PC-9 (cell line): ENCODE measurements at regions of chr17 and their contacts with region 1.

Region 1: GRCh38 chr17:42698736-42699414 is 16.5 kb downstream of the CNTNAP1 start:
- DNase-seq: no peak
- H3K4me3 ChIP-seq: no peak overlapping the region
- H3K27ac ChIP-seq: no peak overlapping the region
- H3K4me1 ChIP-seq: no peaks in the 10 kb centered on the region
- H3K27me3 ChIP-seq: no peaks in the 10 kb centered on the region
- CTCF ChIP-seq: no peak

Region 2: GRCh38 chr17:42193969-42194899 is 504.6 kb before region 1 on chr17 and contains the start of gene GHDC:
- CTCF ChIA-PET with region 1: interaction called, 10 read pairs
- POLR2A ChIA-PET with region 1: no interaction called
- intact Hi-C with region 1: no loop called
- DNase-seq: peak; percentile 63 to 65
- H3K4me3 ChIP-seq: peak within 1 kb of the TSS; percentile 72
- H3K27ac ChIP-seq: no peak within 1 kb of the TSS
- H3K4me1 ChIP-seq: 0 out of 2 replicates have a peak, but pooled peaks cover 6% of the 10 kb centered on the region
- H3K27me3 ChIP-seq: no peaks in the 10 kb centered on the region
- CTCF ChIP-seq: no peak
- total RNA-seq, gene GHDC: 21.5 and 28.6 TPM in 2 replicates

Region 3: DNA sequence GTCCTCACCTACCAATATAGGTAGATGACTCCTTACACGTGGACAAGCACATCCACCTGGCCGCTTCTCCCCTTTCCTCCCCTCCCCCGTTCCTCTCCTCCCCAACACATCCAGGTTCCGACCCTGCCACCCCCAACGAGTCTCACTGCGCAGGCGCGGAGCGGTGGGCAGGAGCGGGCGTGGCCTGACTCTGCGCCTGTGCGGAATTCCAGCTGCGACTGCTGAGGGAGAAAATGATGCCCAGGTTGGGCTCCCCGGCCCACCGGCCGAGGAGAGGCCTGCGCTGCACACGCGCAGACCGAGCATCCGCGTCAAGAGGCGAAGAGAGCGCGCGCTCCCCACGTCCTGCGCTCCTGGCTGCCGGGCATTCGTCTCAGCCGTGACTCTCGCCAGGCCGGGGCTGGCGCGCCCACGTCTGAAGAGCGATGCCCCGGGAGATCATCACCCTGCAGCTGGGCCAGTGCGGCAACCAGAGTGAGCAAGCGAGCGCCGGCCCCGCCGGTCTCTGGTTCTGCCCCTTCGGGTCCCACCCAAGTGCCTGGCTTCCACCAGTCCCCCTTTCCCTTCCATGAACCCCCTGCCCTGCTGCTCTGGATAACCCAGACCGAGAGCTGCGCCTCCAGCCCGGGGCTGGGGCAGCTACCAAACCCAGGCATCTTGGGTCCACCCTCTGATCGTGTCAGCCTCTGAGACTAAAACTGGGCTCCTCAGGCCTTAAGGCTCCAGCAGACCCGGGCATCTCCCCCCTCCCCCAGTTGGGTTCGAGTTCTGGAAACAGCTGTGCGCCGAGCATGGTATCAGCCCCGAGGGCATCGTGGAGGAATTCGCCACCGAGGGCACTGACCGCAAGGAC is 39.6 kb before region 1 on chr17 and contains the start of gene TUBG2:
- CTCF ChIA-PET with region 1: no interaction called
- POLR2A ChIA-PET with region 1: no interaction called
- intact Hi-C with region 1: no loop called
- DNase-seq: peak; percentile 70 to 92
- H3K4me3 ChIP-seq: peak within 1 kb of the TSS; percentile 70
- H3K27ac ChIP-seq: peak within 1 kb of the TSS; percentile 49
- H3K4me1 ChIP-seq: peaks cover 41% of the 10 kb centered on the region
- H3K27me3 ChIP-seq: no peaks in the 10 kb centered on the region
- CTCF ChIP-seq: no peak
- total RNA-seq, gene TUBG2: 25.5 and 28.3 TPM in 2 replicates

Region 4: DNA sequence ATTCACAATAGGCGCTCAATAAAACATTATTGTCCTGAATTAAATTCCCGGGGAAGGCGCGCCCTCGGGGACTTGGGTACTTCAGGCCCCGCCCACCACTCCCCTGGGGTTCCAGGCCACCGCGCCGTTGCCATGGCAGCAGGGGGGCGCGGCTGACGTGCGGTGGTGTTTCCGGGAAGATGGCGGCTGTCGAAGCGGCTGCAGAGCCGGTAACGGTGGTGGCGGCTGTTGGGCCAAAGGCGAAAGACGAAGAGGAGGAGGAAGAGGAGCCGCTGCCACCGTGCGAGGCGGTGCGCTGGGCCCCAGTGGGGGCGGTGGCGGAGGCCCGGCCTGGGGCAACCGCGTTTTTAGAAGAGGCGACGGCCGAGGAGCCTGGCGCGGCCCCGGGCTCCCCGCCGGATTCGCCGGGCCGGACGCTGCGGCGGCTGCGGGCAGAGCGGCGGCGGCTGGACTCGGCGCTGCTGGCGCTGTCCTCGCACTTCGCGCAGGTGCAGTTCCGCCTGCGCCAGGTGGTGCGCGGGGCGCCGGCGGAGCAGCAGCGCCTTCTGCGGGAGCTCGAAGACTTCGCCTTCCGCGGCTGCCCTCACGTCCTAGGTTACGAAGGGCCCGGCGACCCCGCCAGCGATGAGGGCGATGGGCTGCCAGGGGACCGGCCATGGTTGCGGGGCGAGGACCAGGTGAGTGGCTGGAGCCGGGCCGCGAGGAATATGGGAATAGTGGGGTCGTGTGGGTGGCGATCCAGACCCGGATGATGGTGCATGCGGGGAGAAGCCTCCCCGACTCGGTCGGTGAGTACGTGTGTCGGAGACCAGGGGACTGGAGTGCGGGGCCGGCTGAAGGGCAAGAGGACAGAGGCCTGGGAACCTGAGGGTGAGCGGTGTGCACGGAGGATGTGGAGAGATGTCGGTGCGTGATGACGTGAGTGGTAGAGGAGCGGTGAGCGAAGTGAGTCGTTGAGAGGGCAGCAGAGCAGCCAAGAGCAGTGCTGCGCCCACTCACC is 281.8 kb after region 1 on chr17 and contains the start of gene RUNDC1:
- CTCF ChIA-PET with region 1: no interaction called
- POLR2A ChIA-PET with region 1: no interaction called
- intact Hi-C with region 1: no loop called
- DNase-seq: peak; percentile 80 to 90
- H3K4me3 ChIP-seq: peak within 1 kb of the TSS; percentile 81
- H3K27ac ChIP-seq: peak within 1 kb of the TSS; percentile 25; the same call in 1 of the 2 replicates
- H3K4me1 ChIP-seq: peaks cover 20% of the 10 kb centered on the region
- H3K27me3 ChIP-seq: no peaks in the 10 kb centered on the region
- CTCF ChIP-seq: no peak
- total RNA-seq, gene RUNDC1: 12.7 and 13.8 TPM in 2 replicates